Ascending aorta (tissue), 2 donors: ENCODE measurements at regions of chr10 and their contacts with region 1.

Region 1: DNA sequence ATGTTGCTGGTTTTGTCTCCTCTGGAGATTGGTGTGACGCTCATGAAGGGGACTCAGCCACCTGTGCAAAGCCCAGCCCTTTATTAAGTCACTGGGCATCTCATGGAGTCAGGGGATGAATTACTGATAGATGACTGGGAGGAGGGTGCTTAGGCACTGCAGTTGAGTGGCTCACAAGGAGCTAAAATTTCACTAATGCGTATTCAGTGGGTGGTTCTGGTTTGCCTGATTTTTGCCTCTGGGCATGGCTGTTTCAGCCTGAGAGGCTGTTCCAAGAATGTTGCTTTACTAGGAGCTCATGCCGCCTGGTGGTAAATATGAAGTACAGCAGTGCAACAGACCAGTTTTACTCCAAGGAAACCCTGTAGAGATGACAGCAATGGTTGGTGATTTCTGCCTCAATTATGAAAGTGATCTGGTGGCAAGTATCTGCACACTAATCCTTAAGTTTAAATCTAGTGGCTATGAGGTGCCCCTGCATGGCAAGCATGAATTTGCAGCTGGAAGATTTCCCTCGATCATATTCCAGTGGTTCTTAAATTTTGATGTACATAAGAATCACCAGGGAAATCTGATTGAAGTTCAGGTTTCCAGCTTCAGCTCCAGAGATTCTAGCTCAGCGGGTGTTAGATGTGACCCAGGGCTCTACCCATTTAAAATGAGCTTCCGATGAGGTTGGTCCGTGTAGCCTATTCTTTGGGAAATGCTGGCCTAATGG is 19.9 kb downstream of the ACTA2 start:
- DNase-seq: peak; percentile 41 to 87
- H3K4me3 ChIP-seq: no peak overlapping the region
- H3K27ac ChIP-seq: peak overlapping the region; percentile 72 to 88
- H3K4me1 ChIP-seq: peaks cover 0 to 7% of the 10 kb centered on the region in 2 donors
- H3K27me3 ChIP-seq: no peaks in the 10 kb centered on the region
- CTCF ChIP-seq: peak; percentile 82 to 90 (median 89)

Region 2: GRCh38 chr10:88835096-88835909 is 97.4 kb before region 1 on chr10:
- intact Hi-C with region 1: loop called (anchors 1 kb)
- DNase-seq: peak in 1 of 2 donors; percentile 90
- H3K4me3 ChIP-seq: no peak overlapping the region
- H3K27ac ChIP-seq: no peak overlapping the region
- H3K4me1 ChIP-seq: peaks cover 0 to 3% of the 10 kb centered on the region in 2 donors
- H3K27me3 ChIP-seq: no peaks in the 10 kb centered on the region
- CTCF ChIP-seq: peak; percentile 83 to 85 (median 84)

Region 3: GRCh38 chr10:88901206-88901983 is 31.3 kb before region 1 on chr10:
- intact Hi-C with region 1: no loop called
- DNase-seq: no peak
- H3K4me3 ChIP-seq: no peak overlapping the region
- H3K27ac ChIP-seq: no peak overlapping the region
- H3K4me1 ChIP-seq: no peaks in the 10 kb centered on the region
- H3K27me3 ChIP-seq: no peaks in the 10 kb centered on the region
- CTCF ChIP-seq: no peak

Region 4: DNA sequence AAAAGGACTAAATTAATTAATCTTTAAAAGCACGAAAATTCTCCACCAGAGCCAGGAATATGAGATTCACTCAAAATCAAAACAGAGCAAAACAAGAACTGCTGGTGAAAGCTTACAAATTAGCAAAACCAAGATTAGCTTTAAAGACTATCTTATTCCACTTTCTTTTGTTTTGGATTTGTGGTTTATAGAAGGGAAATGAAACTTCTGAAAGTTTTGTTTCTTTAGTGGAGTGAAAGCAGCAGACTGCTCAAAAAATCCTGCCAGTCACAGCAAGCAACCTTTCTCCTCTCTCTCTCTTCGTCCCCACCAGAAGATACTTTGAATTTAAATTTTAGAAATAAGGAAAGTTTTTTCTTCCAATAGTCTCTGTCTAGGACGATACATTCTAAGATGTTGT is 12.1 kb after region 1 on chr10:
- intact Hi-C with region 1: no loop called
- DNase-seq: no peak
- H3K4me3 ChIP-seq: peak overlapping the region; percentile 32 to 84
- H3K27ac ChIP-seq: peak overlapping the region; percentile 35 to 66
- H3K4me1 ChIP-seq: peaks cover 24 to 41% of the 10 kb centered on the region in 2 donors
- H3K27me3 ChIP-seq: no peaks in the 10 kb centered on the region
- CTCF ChIP-seq: no peak

Region 5: DNA sequence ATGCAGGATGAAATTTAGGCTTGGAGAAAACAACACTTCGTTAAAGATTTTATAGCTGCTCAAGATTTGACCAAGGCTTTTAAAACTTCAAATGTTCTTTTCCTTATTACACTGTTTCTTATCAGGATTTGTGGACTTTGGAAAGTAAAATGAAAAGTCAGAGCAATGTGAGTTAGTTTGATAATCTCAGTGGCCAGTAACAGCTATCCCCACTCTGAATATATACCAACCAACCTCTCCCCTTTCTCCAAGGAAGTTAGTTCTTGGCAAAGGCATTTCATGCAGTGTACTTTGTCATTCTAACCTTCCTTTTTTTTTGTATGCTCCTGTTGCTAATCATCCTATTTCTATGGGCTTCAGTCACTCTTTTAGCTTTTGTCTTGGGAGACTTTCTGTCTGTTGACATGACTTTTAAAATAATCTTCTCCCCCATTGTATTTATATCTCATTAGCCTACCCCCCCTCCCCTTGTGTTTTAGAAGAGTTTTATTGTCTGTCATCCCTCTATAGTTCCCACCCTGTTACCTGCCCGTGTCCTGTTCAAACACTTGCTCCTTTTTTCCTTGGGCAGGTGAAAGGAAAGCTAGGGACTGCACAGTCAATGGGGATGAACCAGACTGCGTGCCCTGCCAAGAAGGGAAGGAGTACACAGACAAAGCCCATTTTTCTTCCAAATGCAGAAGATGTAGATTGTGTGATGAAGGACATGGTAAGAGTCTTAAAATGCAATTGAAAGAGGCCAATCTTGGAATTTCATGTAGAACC is 74.6 kb after region 1 on chr10:
- intact Hi-C with region 1: no loop called
- DNase-seq: no peak
- H3K4me3 ChIP-seq: no peak overlapping the region
- H3K27ac ChIP-seq: no peak overlapping the region
- H3K4me1 ChIP-seq: no peaks in the 10 kb centered on the region
- H3K27me3 ChIP-seq: no peaks in the 10 kb centered on the region
- CTCF ChIP-seq: no peak